Common myeloid progenitor, CD34-positive (primary cell): ENCODE measurements at regions of chr1 and their contacts with region 1.

Region 1: GRCh38 chr1:158203693-158204457 is 23.2 kb downstream of the CD1D start:
- DNase-seq: peak; percentile 60 to 65 (median 61)
- H3K4me3 ChIP-seq: no peak overlapping the region
- H3K27ac ChIP-seq: no peak overlapping the region
- H3K4me1 ChIP-seq: peaks cover 0 to 7% (median under 1%) of the 10 kb centered on the region in 4 experiments
- H3K27me3 ChIP-seq: peaks cover 0 to 18% (median 4%) of the 10 kb centered on the region in 5 experiments

Region 2: DNA sequence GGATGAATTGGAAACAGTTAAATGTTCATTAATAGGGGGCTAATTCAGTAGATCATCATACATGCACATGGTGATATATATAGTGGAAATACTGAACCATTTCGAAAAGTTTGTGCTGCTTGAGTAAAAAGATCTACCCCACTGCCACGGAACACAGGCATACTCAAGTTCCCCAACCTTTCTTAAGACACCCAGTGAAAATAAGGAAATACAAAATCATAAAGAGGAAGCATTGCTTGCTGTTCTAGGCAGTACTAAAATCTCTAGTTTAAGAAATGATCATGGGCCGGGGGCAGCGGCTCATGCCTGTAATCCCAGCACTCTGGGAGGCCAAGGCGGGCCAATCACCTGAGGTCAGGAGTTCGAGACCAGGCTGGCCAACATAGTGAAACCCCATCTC is 248.0 kb before region 1 on chr1:
- CTCF ChIA-PET with region 1: no interaction called
- POLR2A ChIA-PET with region 1: no interaction called
- DNase-seq: peak; percentile 12 to 66 (median 59)
- H3K4me3 ChIP-seq: no peak overlapping the region
- H3K27ac ChIP-seq: no peak overlapping the region
- H3K4me1 ChIP-seq: peaks cover 0 to 18% (median 5%) of the 10 kb centered on the region in 4 experiments
- H3K27me3 ChIP-seq: peaks cover 0 to 2% (median 0%) of the 10 kb centered on the region in 5 experiments

Region 3: DNA sequence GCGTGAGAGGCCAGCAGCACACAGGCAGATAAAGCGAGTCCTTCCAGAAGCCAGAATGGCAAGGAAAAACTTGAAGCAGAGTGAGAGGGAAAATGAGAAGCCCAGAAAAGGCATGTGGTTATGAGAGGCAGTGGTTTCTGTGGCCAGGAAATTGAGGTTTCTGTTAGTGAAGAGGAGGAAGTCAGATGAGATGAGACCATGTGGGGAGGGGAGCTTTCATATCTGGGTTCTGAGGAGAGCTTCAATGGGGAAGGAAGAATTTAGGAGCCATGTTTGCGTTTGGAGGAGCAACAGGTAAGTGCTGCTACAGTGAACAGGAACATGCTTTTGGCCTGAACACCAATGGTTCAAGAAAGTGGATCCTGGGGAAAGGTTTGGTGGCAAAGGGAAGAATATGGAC is 44.2 kb after region 1 on chr1:
- CTCF ChIA-PET with region 1: interaction called, 13 read pairs
- POLR2A ChIA-PET with region 1: no interaction called
- DNase-seq: peak; percentile 88 to 95 (median 94)
- H3K4me3 ChIP-seq: no peak overlapping the region
- H3K27ac ChIP-seq: no peak overlapping the region
- H3K4me1 ChIP-seq: peaks cover 11 to 39% (median 15%) of the 10 kb centered on the region in 4 experiments
- H3K27me3 ChIP-seq: peaks cover 0 to 49% (median 30%) of the 10 kb centered on the region in 5 experiments

Region 4: DNA sequence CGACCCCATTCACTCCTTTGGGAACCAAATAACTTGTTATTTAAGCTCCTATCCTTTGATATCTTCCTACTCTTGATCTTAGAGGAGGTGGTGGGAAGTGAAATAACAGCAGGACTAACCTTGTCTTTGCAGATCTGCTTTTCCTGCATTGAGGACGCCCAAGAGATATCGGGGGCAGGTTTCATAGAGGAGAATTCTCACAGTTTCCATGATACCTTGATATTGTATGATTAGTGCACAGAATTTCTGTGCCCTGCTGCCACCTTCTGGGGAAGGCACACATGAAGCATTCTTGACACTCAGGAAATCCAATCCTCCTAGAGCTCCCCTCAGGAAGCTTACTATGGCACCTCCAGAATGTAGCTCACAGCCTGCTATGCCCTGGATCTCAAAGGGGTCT is 125.9 kb after region 1 on chr1:
- CTCF ChIA-PET with region 1: interaction called, 61 read pairs
- POLR2A ChIA-PET with region 1: no interaction called
- DNase-seq: peak; percentile 22 to 47 (median 27)
- H3K4me3 ChIP-seq: no peak overlapping the region
- H3K27ac ChIP-seq: no peak overlapping the region
- H3K4me1 ChIP-seq: peaks cover 0 to 10% (median 0%) of the 10 kb centered on the region in 4 experiments
- H3K27me3 ChIP-seq: peaks cover 0 to 13% (median 6%) of the 10 kb centered on the region in 5 experiments

Region 5: DNA sequence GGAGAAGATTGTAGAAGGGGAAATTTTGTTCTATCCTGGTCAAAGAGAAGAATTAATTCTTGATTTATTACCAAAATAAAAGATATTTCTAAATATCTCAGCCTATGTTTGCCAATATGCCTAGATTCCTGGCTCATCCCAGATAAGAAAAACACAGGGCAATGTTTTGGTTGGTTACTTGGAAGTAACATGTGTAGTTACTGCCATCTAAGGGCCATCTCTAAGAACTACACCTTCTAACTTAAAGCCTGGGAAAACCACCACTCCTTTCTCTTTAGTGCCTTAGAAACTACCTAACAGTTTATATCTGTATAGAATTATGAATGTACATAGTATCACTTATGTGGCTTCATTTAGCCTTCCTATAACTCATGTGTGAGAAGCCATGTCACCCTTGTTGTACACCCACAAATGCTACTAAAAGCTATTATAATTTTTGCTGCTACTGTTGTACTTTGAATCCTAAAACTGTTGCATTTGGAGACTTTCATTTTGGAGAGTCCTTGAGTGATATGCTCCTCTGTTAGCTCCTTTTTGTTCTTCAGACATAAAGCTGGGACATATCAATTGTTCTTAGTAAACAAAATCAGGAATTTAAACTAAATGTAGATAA is 868.2 kb after region 1 on chr1:
- CTCF ChIA-PET with region 1: interaction called, 13 read pairs
- POLR2A ChIA-PET with region 1: no interaction called
- DNase-seq: peak; percentile 54 to 68 (median 58)
- H3K4me3 ChIP-seq: no peak overlapping the region
- H3K27ac ChIP-seq: no peak overlapping the region
- H3K4me1 ChIP-seq: peaks cover 9 to 19% (median 11%) of the 10 kb centered on the region in 4 experiments
- H3K27me3 ChIP-seq: no peaks in the 10 kb centered on the region